ENCODE measurements at regions of chr13 and their contacts with region 1.

Region 1: DNA sequence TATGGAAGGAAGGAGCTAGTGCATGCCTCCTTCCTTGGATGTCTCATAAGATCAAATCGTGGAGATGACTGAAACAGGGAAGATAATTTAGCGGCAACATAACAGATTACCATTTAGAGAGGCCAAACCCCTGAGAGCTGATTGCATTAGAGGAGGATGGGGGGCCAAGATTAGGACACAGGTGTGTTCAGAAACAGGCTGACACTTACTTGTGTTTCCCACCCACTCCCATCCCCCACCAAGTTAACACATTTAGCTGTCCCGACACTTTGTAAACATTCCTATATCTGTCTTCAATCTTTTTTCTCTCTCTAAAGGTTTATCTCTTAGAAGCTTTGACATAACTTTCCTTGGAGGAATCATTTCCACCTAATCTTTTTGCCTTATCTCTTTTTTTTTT is 48.8 kb upstream of the KCTD4 start:
- DNase-seq: no peak
- ATAC-seq: no peak; the same call in 1 of the 2 replicates
- H3K4me3 ChIP-seq: no peak overlapping the region
- H3K27ac ChIP-seq: no peak overlapping the region
- H3K4me1 ChIP-seq: peaks cover 12% of the 10 kb centered on the region
- H3K27me3 ChIP-seq: no peaks in the 10 kb centered on the region
- CTCF ChIP-seq: no peak
- POLR2A ChIP-seq: no peak
- RAD21 ChIP-seq: no peak

Region 2: GRCh38 chr13:45082964-45083363 is 166.7 kb before region 1 on chr13:
- CTCF ChIA-PET with region 1: no interaction called
- POLR2A ChIA-PET with region 1: interaction called, 15 read pairs
- dilution Hi-C with region 1: no loop called
- in situ Hi-C with region 1: no loop called
- intact Hi-C with region 1: no loop called
- DNase-seq: peak; percentile 66
- ATAC-seq: peak; percentile 63
- H3K4me3 ChIP-seq: no peak overlapping the region
- H3K27ac ChIP-seq: no peak overlapping the region
- H3K4me1 ChIP-seq: no peaks in the 10 kb centered on the region
- H3K27me3 ChIP-seq: no peaks in the 10 kb centered on the region; the same call in 1 of the 2 replicates
- CTCF ChIP-seq: no peak
- POLR2A ChIP-seq: no peak
- RAD21 ChIP-seq: no peak

Region 3: DNA sequence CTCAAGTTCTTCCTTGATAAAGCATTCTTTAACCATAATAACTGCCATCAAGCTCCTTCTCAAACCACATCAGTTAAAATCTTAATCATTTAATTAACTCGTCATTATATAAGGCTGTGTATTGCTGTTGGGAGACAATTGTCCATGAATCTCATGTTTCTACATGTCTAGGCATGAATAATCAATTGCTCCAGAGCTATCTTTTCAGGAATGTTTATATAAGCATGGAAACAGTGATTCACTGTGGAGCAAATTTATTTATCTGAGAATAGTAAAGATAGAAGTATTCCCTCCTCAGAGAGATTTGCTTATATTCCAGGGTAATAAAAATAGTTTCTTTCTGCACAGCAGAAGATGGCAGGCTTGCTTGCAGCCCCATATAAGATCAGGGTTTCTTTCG is 523.6 kb after region 1 on chr13:
- CTCF ChIA-PET with region 1: no interaction called
- POLR2A ChIA-PET with region 1: no interaction called
- dilution Hi-C with region 1: no loop called
- in situ Hi-C with region 1: no loop called
- intact Hi-C with region 1: no loop called
- DNase-seq: peak; percentile 79
- ATAC-seq: peak; percentile 93
- H3K4me3 ChIP-seq: no peak overlapping the region
- H3K27ac ChIP-seq: peak overlapping the region; percentile 89; the same call in 1 of the 2 replicates
- H3K4me1 ChIP-seq: peaks cover 9% of the 10 kb centered on the region
- H3K27me3 ChIP-seq: peaks cover 20% of the 10 kb centered on the region
- CTCF ChIP-seq: no peak
- POLR2A ChIP-seq: no peak
- RAD21 ChIP-seq: no peak

Measured in IMR-90 (cell line).